ENCODE measurements at regions of chr6 and their contacts with region 1.

Region 1: DNA sequence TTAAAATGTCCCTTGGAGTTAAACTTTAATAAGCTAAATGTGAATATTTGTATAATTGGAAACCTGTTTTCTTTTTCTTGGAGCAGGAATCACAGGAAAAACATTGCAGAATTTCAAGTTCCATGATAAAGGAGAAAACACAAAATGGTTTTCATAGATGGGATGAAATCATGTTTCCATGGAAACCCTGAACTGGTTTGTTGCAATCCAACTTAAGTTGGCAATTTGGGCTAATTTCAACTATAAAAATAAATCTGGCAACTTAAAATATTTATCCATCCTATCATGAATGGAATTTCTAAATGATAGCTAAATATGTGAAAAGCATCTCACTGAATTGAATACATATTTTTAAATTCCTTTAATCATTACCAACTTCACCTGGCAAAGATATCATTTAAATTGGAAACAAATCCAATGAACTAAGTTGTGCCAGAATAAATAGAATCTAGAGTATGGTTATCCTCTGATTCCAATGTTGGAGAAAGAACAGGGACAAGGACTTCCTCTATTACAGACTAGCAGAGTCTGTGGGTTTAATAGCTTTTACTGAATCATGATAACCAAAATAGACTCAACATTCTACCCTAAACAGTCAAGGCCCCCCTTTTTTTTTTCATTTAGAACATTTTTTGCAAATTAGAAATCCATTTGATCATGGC is 33.2 kb downstream of the COL21A1 start:
- DNase-seq: no peak
- ATAC-seq: no peak
- H3K4me3 ChIP-seq: no peak overlapping the region
- H3K27ac ChIP-seq: no peak overlapping the region
- H3K4me1 ChIP-seq: no peaks in the 10 kb centered on the region
- H3K27me3 ChIP-seq: no peaks in the 10 kb centered on the region
- CTCF ChIP-seq: no peak
- EP300 ChIP-seq: no peak
- POLR2A ChIP-seq: no peak
- RAD21 ChIP-seq: no peak

Region 2: DNA sequence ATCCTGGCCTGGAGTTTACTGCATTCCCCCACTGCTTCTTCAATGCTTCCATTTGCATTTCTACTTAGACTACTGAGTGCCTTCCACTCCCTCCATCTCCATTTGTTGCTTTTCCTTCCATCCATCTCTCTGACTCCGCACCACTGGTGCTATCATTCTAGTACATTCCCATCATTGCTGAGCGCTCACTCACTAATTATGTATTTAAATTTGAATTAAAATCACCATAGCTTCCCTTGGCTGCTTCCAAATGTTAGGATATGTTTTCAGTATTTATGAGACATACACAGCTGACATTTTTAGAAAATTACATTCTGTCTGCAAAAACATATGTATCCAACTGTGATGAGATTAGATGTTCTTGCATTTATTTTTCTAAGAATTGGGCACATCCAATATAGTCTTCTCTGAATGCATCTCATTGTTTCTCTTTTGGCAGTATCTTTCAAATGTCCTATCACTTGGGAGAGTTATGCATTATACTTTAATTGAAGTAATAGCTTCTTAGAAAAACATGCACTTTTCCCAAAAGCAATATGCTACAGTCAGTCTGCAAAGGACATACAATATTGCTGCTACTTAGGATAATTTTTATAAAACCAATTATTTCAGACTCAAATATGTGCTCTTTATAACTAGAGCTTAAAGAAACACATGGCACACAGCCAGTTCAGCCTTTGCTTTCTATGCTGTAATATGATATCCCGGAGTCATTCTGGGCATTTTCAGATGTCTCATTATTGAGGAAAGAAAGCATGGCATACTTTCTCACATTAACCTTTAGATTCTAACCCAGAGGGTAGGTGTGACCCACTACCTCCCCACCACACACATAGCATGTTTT is 45.3 kb after region 1 on chr6:
- CTCF ChIA-PET with region 1: no interaction called
- POLR2A ChIA-PET with region 1: no interaction called
- RAD21 ChIA-PET with region 1: no interaction called
- SMC1A ChIA-PET with region 1: no interaction called
- in situ Hi-C with region 1: no loop called
- intact Hi-C with region 1: loop called (anchors 5 kb)
- DNase-seq: no peak
- ATAC-seq: no peak
- H3K4me3 ChIP-seq: no peak overlapping the region
- H3K27ac ChIP-seq: no peak overlapping the region
- H3K4me1 ChIP-seq: no peaks in the 10 kb centered on the region
- H3K27me3 ChIP-seq: peaks cover 0 to 2% of the 10 kb centered on the region in 2 experiments; a peak in 1 of 4 replicates
- CTCF ChIP-seq: no peak
- EP300 ChIP-seq: no peak
- POLR2A ChIP-seq: no peak
- RAD21 ChIP-seq: no peak

Measured in GM12878 (cell line).